Activated naive CD4-positive, alpha-beta T cell treated with anti-CD3 and anti-CD28 coated beads for 36 hours (primary cell): ENCODE measurements at regions of chr13 and their contacts with region 1.

Region 1: DNA sequence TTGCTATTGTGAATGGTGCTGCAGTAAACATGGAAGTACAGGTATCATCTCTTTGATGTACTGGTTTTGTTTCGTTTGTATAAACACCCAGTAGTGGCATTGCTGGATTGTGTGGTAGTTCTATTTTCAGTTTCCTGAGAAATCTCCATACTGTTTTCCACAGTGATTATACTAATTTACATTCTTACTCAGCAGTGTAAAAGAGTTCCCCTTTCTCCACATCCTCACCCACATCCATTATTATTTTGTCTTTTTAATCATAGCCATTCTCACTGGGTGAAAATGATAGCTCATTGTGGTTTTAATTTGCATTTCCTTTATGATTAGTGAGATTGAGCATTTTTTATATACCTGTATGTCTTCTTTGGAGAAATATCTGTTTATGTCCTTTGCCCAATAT is 62.3 kb upstream of the PARP4 start:
- DNase-seq: no peak
- H3K4me3 Mint-ChIP-seq: no peak overlapping the region
- H3K27ac Mint-ChIP-seq: no peak overlapping the region
- H3K4me1 Mint-ChIP-seq: peaks cover 10% of the 10 kb centered on the region
- H3K27me3 Mint-ChIP-seq: peaks cover 7% of the 10 kb centered on the region

Region 2: GRCh38 chr13:22599156-22599555 is 1975.7 kb before region 1 on chr13:
- CTCF ChIA-PET with region 1: no interaction called
- intact Hi-C with region 1: no loop called
- DNase-seq: no peak
- H3K4me3 Mint-ChIP-seq: no peak overlapping the region
- H3K27ac Mint-ChIP-seq: no peak overlapping the region
- H3K4me1 Mint-ChIP-seq: no peaks in the 10 kb centered on the region
- H3K27me3 Mint-ChIP-seq: no peaks in the 10 kb centered on the region

Region 3: DNA sequence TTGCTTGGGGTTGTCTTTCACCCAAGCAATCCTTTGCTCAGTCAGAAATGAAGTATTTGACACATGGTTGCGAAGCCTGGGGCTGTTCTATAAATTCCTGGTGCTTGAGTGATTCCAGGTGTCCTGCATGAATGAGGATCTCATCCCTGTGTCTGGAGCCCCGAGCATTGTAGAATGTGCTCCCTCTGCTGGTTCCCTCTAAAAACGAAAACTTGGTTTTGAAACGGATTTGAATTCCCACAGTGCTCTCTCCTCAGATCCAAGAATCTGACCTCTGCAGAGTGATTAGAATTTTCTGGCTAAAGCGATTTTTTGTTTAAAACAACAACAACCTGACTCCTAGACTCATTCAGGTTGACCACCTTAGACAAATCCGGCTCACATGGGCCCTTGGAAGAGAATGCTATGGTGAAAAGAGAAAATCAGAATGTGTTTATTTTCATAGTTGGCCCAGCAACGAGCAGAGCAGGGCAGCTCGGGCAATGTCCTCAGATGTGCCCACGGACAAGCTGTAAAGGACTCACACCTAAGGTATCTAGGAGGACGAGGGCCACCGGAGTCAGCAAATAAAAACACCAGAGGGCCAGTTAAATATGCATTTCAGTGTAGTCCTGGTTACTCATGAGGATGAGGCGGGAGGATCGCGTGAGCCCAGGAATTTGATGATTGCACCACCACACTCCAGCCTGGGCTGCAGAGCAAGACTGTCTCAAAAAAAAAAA is 96.7 kb after region 1 on chr13:
- CTCF ChIA-PET with region 1: interaction called, 11 read pairs
- intact Hi-C with region 1: loop called (anchors 1 kb)
- DNase-seq: no peak
- H3K4me3 Mint-ChIP-seq: no peak overlapping the region
- H3K27ac Mint-ChIP-seq: no peak overlapping the region
- H3K4me1 Mint-ChIP-seq: peaks cover 10% of the 10 kb centered on the region
- H3K27me3 Mint-ChIP-seq: peaks cover 29% of the 10 kb centered on the region

Region 4: GRCh38 chr13:25971459-25972145 is 1396.8 kb after region 1 on chr13:
- CTCF ChIA-PET with region 1: no interaction called
- intact Hi-C with region 1: no loop called
- DNase-seq: peak; percentile 76
- H3K4me3 Mint-ChIP-seq: no peak overlapping the region
- H3K27ac Mint-ChIP-seq: peak overlapping the region; percentile 46
- H3K4me1 Mint-ChIP-seq: peaks cover 42% of the 10 kb centered on the region
- H3K27me3 Mint-ChIP-seq: no peaks in the 10 kb centered on the region